Activated CD8-positive, alpha-beta T cell treated with anti-CD3 and anti-CD28 coated beads, Interleukin-2, amount 10 ng/mL, durations not matched to agents 7 days and 5 days (primary cell): ENCODE measurements at regions of chr7 and their contacts with region 1.

Region 1: GRCh38 chr7:116588641-116589594 is 64.1 kb downstream of the CAV1 start:
- DNase-seq: no peak
- ATAC-seq: peak; percentile 38
- H3K4me3 Mint-ChIP-seq: no peak overlapping the region
- H3K27ac Mint-ChIP-seq: no peak overlapping the region
- H3K4me1 Mint-ChIP-seq: peaks cover 26% of the 10 kb centered on the region
- H3K27me3 Mint-ChIP-seq: peaks cover 17% of the 10 kb centered on the region

Region 2: DNA sequence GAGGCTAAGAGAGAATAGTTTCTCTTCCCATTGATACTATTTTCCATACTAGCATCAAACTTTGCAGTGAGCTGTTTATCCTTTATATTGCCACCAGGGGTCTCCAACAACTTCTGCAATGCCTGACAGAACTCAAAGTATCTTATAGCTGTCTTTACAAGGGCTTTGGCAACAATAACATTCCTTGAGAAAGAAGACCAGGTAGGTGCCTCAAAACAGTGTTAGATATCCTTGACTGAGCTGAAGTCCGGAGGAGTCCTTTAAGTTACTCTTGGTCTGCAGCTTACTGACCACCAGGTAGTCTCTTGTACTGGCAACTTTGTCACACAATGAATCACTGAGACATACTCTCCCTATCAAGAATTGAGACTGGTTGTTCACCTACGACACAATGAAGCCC is 408.6 kb before region 1 on chr7:
- CTCF ChIA-PET with region 1: interaction called, 15 read pairs
- POLR2A ChIA-PET with region 1: no interaction called
- DNase-seq: peak; percentile 39
- ATAC-seq: peak; percentile 72
- H3K4me3 Mint-ChIP-seq: no peak overlapping the region
- H3K27ac Mint-ChIP-seq: no peak overlapping the region
- H3K4me1 Mint-ChIP-seq: no peaks in the 10 kb centered on the region
- H3K27me3 Mint-ChIP-seq: peaks cover 9% of the 10 kb centered on the region

Region 3: GRCh38 chr7:116193329-116194087 is 395.4 kb before region 1 on chr7:
- CTCF ChIA-PET with region 1: no interaction called
- POLR2A ChIA-PET with region 1: no interaction called
- DNase-seq: no peak
- ATAC-seq: no peak
- H3K4me3 Mint-ChIP-seq: no peak overlapping the region
- H3K27ac Mint-ChIP-seq: no peak overlapping the region
- H3K4me1 Mint-ChIP-seq: no peaks in the 10 kb centered on the region
- H3K27me3 Mint-ChIP-seq: peaks cover 19% of the 10 kb centered on the region

Region 4: DNA sequence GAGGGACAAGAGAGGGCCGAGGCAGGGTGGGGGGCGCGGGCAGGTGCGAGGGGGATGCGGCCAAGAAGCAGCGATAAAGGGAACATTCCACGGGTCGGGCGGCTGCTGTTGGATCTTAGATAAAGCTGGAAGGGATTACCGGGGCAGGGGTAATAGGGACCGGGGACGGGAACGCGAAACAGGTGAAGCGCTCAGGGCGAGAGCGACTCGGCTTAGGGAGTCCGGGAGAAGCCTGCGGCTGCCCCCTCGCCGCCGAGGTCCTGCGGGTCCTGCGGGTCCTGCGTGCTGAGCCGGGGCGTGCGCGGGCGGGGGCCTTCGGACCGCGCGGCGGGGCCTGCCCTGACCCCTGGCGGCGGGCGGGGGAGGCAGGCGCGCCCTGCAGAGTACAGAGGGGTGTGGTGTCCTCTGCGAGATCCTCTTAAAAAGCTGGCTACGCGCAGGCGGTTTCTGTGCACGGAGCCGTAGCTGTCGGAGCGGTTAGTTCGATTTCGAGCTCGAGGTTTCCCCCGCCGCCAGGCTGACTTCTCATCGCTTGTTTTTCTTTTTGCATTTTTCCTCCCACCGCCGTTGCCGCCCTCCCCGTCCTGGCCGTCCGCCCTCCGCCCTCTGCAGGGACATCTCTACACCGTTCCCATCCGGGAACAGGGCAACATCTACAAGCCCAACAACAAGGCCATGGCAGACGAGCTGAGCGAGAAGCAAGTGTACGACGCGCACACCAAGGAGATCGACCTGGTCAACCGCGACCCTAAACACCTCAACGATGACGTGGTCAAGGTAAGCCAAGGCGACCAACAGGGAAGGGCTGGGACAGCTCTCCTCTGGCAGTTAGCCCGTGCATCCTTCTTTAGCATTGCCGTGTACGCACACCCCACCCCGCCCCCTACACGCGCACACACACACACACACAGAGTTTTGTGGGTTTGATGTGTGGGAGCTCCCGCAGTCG is 62.7 kb before region 1 on chr7:
- CTCF ChIA-PET with region 1: interaction called, 25 read pairs
- POLR2A ChIA-PET with region 1: no interaction called
- DNase-seq: peak; percentile 72
- ATAC-seq: peak; percentile 97
- H3K4me3 Mint-ChIP-seq: peak overlapping the region; percentile 78
- H3K27ac Mint-ChIP-seq: no peak overlapping the region
- H3K4me1 Mint-ChIP-seq: peaks cover 22% of the 10 kb centered on the region
- H3K27me3 Mint-ChIP-seq: peaks cover 75% of the 10 kb centered on the region

Region 5: DNA sequence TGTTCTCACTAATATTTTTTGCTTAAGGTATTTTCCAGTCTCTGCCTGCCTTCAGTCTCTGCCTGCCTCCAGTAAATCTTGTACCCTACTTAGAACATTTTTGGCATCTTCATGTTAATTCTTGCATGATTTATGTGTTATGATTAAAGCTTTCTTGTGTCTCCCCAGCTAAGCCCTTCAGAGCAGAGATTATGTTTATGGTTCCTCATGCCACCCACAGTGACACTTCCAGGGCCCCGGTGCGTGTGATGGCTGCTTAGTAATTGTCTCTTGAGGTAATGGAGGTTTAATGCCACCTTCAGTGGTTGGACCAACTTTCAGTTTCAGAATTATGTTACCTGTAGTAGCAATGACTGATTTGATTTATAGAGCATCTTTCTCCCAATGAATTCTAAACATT is 12.5 kb after region 1 on chr7:
- CTCF ChIA-PET with region 1: interaction called, 13 read pairs
- POLR2A ChIA-PET with region 1: no interaction called
- DNase-seq: no peak
- ATAC-seq: peak; percentile 61
- H3K4me3 Mint-ChIP-seq: no peak overlapping the region
- H3K27ac Mint-ChIP-seq: no peak overlapping the region
- H3K4me1 Mint-ChIP-seq: peaks cover 11% of the 10 kb centered on the region
- H3K27me3 Mint-ChIP-seq: peaks cover 5% of the 10 kb centered on the region

Region 6: GRCh38 chr7:116614499-116615262 is 25.8 kb after region 1 on chr7:
- CTCF ChIA-PET with region 1: no interaction called
- POLR2A ChIA-PET with region 1: no interaction called
- DNase-seq: no peak
- ATAC-seq: no peak
- H3K4me3 Mint-ChIP-seq: no peak overlapping the region
- H3K27ac Mint-ChIP-seq: no peak overlapping the region
- H3K4me1 Mint-ChIP-seq: no peaks in the 10 kb centered on the region
- H3K27me3 Mint-ChIP-seq: peaks cover 21% of the 10 kb centered on the region

Region 7: DNA sequence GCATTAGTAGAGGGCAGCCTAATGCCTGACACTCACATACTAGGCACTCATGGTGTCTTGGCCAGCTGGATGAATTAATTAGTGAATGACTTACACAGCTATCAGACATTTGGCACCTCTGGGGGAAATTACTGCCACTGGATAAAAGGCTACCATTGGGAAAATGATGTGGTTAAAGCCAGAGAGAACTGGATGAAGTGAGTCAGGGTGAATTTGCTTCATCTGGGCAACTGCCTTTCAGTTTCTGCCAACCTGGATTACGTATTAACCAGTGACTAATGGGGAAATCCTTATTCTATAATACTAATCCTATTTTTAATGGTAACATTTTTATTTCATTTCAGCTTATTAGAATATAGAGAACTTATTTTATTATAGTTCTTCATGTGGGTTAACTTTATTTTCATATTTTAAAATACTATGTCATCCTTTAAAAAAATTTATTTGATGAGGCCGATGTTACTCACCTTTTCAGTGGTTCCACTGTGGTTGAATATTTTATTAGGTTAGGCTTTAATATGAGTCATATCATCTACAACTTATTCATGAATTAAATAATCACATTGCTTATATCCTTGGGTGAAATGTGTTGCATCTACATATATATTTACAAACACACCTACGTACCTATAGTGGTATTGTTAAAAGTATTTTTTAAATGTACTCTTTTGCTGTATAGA is 187.8 kb after region 1 on chr7:
- CTCF ChIA-PET with region 1: no interaction called
- POLR2A ChIA-PET with region 1: no interaction called
- DNase-seq: no peak
- ATAC-seq: no peak
- H3K4me3 Mint-ChIP-seq: no peak overlapping the region
- H3K27ac Mint-ChIP-seq: no peak overlapping the region
- H3K4me1 Mint-ChIP-seq: no peaks in the 10 kb centered on the region
- H3K27me3 Mint-ChIP-seq: peaks cover 4% of the 10 kb centered on the region